Activated CD8-positive, alpha-beta T cell treated with anti-CD3 and anti-CD28 coated beads for 36 hours (primary cell): ENCODE measurements at regions of chr17 and their contacts with region 1.

Region 1: DNA sequence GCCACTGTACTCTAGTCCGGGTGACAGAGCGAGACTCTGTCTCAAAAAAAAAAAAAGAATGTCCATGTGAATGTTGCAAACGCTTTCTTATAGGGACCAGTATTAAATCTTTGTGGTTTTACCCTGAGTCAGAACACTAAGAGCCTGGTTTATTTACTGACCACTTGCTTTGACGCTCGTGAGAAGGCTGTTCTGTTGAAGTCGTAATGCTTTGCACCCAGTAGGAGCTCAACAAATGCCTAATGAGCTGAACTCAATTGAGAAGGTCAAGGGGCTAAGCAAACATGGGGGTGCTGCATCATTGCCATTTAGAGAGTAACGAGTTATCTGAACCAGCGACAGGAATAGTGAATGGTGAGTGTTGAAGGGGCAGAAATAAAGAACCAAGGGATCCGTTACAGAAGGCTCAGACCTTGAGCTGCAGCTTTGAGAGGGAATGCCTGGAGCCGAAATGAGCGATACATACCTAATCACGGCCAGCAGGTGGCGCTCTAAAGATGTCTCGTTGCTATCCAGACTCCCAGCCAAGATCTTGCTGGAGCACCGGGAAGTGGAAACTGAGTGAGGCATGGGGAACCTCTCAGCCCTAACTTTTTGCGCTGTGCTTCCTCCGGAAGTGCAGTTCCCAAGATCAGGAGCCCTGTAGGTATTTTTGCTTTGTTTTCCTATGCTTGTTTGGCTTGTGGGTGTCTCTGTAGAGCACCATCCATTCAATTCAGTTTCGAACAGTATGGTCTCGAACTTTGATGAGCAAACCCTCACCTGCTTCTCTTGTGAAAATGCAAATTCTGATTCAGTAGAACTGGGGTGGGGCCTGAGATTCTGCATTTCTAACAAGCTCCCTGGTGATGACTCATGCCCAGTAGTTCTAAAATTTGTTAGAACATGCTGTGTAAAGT is 12.6 kb upstream of the RNF222 start:
- DNase-seq: peak; percentile 84
- ATAC-seq: peak; percentile 85
- H3K4me3 Mint-ChIP-seq: no peak overlapping the region
- H3K27ac Mint-ChIP-seq: no peak overlapping the region
- H3K4me1 Mint-ChIP-seq: peaks cover 13% of the 10 kb centered on the region
- H3K27me3 Mint-ChIP-seq: peaks cover 9% of the 10 kb centered on the region
- CTCF ChIP-seq: peak; percentile 96

Region 2: DNA sequence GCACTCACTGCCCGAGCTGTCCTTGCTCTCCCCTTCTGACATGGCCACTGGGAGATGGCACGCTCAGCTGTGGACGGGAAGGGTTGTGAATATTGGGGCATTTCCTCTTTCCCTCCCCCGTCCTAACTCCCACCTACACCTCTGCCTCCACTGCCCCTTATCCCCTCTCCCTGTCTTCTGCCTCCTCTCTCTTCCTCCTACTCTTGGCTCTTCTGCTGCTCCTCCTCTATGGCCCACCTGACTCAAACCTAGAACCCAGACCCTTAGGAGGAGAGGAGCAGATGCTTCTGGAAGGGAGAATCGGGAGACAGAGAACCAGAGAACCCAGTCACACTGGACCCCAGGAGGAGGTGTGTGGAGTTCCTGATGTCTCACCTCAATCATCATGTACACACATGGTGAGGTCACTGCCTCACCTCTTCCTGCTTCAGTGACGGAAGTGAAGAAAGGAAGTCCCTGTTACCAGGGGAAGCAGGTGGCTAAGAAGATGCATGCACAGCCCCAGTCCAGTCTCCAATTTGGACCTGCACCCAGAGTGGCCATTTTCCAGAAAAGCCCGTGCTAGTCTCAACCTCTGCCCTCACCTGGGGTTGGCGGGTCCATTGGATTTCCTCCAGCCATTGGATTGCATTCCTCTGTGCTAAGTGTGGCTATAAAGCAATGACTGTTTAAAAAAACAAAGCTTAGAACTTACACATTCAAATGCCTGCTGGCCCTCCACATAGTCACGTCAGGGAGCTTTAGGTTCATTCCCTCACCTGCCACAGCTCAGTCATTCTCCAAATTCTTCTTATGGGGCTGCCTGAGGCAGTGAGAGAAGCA is 16.6 kb before region 1 on chr17:
- CTCF ChIA-PET with region 1: interaction called, 33 read pairs
- POLR2A ChIA-PET with region 1: no interaction called
- intact Hi-C with region 1: no loop called
- DNase-seq: peak; percentile 72
- ATAC-seq: peak; percentile 98
- H3K4me3 Mint-ChIP-seq: no peak overlapping the region
- H3K27ac Mint-ChIP-seq: peak overlapping the region; percentile 91
- H3K4me1 Mint-ChIP-seq: peaks cover 9% of the 10 kb centered on the region
- H3K27me3 Mint-ChIP-seq: peaks cover 2% of the 10 kb centered on the region
- CTCF ChIP-seq: no peak

Region 3: DNA sequence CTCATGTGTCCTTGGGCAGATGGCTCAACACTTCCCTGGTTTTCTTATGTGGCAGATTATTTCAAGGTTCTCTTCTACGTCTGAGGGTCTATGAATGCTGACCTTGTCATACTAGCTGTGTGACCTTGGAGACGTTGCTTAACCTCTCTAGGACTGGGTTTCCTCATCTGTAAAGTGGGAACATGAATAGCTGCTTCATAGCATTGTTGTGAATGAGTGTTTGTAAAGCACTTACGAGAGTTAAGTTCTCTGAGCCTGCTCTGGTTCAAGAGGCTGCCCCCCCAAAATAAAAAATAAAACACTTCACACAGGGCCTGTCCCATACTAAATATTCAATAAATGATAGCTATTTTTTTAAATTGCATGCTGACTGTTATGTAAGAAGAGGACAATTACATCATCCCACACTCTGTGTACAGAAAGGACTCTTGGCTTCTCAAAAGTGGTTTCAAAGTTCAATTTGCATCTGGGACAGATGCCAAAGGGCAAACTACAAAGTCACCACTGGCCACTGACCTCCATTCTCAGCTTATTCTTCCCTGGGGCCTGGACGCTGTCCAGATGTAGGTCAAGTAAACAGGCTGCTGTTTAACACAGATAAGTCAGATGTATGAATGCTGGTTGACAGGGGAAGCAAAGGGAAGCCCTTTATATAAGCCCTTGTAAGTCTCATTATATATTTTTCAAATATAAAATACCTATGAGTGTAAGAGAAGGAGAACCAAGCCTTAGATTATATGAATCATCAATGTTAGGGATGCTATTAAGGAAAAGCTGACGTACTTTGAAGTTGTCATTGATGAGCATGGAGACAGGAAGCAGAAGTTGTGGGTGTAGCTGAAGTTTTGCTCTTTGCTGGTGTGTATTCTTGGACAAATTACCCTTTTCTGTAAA is 10.1 kb after region 1 on chr17:
- CTCF ChIA-PET with region 1: interaction called, 24 read pairs
- POLR2A ChIA-PET with region 1: no interaction called
- intact Hi-C with region 1: no loop called
- DNase-seq: no peak
- ATAC-seq: no peak
- H3K4me3 Mint-ChIP-seq: no peak overlapping the region
- H3K27ac Mint-ChIP-seq: no peak overlapping the region
- H3K4me1 Mint-ChIP-seq: no peaks in the 10 kb centered on the region
- H3K27me3 Mint-ChIP-seq: peaks cover 22% of the 10 kb centered on the region
- CTCF ChIP-seq: no peak

Region 4: DNA sequence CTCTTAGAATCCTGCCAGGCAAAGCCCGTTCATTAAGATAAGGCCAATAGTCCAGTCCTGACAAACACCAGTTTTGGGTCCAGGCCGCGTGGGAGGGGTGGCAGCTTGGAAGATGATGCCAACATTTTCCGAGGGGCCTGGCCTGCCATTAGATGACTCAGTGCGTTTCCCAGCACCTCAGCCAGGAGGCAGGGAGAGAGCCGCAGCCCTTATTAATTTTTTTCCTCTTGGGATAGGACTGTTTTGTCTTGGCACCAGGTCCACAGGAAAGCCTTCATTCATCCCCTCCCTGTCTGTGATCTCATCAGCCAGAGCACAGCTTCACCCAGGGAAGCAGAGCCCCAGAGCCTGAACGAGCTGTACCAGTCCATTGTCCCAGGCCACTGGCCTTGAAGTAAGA is 20.8 kb after region 1 on chr17:
- CTCF ChIA-PET with region 1: interaction called, 11 read pairs
- POLR2A ChIA-PET with region 1: no interaction called
- intact Hi-C with region 1: no loop called
- DNase-seq: no peak
- ATAC-seq: no peak
- H3K4me3 Mint-ChIP-seq: no peak overlapping the region
- H3K27ac Mint-ChIP-seq: no peak overlapping the region
- H3K4me1 Mint-ChIP-seq: peaks cover 3% of the 10 kb centered on the region
- H3K27me3 Mint-ChIP-seq: no peaks in the 10 kb centered on the region
- CTCF ChIP-seq: no peak

Region 5: DNA sequence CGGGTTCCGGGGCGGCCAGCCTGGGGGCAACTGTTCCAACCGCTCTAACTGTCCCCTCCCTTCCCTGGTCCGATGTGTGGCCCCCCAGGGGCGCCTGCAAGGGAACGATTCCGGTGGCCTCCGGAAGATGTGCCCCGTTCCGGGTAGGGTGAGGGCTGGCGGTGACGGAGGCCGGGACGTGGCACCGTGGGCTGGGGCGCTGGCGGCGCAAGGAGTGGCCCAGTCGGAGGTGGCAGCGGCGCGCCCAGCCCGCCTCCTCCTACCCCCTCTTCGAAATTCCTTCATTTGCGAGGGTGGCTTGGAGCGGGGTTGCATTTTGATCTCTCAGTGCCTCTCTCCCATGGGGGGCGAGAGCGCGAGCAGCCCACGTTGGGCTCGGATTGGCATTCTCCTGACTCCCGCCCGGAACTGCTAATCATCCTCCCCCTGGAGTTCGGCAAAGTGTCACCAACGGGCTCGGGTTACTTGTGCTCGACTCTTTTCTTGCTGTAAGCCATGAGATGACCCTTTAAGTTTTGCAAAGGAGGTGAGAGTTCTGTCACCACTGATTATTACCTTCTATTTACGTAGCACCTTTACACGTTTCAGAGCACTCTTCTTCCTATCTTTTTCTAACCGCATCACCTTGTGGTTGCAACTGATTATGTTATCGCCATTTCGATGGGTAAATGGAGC is 26.1 kb after region 1 on chr17:
- CTCF ChIA-PET with region 1: interaction called, 19 read pairs
- POLR2A ChIA-PET with region 1: no interaction called
- intact Hi-C with region 1: no loop called
- DNase-seq: peak; percentile 75
- ATAC-seq: peak; percentile 58
- H3K4me3 Mint-ChIP-seq: peak overlapping the region; percentile 86
- H3K27ac Mint-ChIP-seq: peak overlapping the region; percentile 91
- H3K4me1 Mint-ChIP-seq: peaks cover 34% of the 10 kb centered on the region
- H3K27me3 Mint-ChIP-seq: no peaks in the 10 kb centered on the region
- CTCF ChIP-seq: no peak

Region 6: GRCh38 chr17:8745586-8746500 is 335.6 kb after region 1 on chr17:
- CTCF ChIA-PET with region 1: interaction called, 39 read pairs
- POLR2A ChIA-PET with region 1: interaction called, 3 read pairs
- intact Hi-C with region 1: loop called (anchors 5 kb)
- DNase-seq: peak; percentile 83
- ATAC-seq: peak; percentile 74
- H3K4me3 Mint-ChIP-seq: peak overlapping the region; percentile 82
- H3K27ac Mint-ChIP-seq: peak overlapping the region; percentile 88
- H3K4me1 Mint-ChIP-seq: peaks cover 12% of the 10 kb centered on the region
- H3K27me3 Mint-ChIP-seq: no peaks in the 10 kb centered on the region
- CTCF ChIP-seq: peak; percentile 99

Region 7: GRCh38 chr17:10316801-10317542 is 1906.8 kb after region 1 on chr17:
- CTCF ChIA-PET with region 1: no interaction called
- POLR2A ChIA-PET with region 1: no interaction called
- intact Hi-C with region 1: no loop called
- DNase-seq: peak; percentile 74
- ATAC-seq: peak; percentile 76
- H3K4me3 Mint-ChIP-seq: no peak overlapping the region
- H3K27ac Mint-ChIP-seq: no peak overlapping the region
- H3K4me1 Mint-ChIP-seq: peaks cover 3% of the 10 kb centered on the region
- H3K27me3 Mint-ChIP-seq: peaks cover 9% of the 10 kb centered on the region
- CTCF ChIP-seq: peak; percentile 85